Activated CD4-positive, alpha-beta memory T cell treated with anti-CD3 and anti-CD28 coated beads, Interleukin-2, amount 10 ng/mL, durations not matched to agents 7 days and 5 days (primary cell): ENCODE measurements at regions of chr19 and their contacts with region 1.

Region 1: GRCh38 chr19:16628183-16628983 is at the start of gene MED26:
- DNase-seq: peak; percentile 96
- H3K4me3 Mint-ChIP-seq: peak within 1 kb of the TSS; percentile 99
- H3K27ac Mint-ChIP-seq: peak within 1 kb of the TSS; percentile 100
- H3K4me1 Mint-ChIP-seq: peaks cover 63% of the 10 kb centered on the region
- H3K27me3 Mint-ChIP-seq: no peaks in the 10 kb centered on the region
- total RNA-seq, gene MED26: 15.5 to 15.9 TPM

Region 2: DNA sequence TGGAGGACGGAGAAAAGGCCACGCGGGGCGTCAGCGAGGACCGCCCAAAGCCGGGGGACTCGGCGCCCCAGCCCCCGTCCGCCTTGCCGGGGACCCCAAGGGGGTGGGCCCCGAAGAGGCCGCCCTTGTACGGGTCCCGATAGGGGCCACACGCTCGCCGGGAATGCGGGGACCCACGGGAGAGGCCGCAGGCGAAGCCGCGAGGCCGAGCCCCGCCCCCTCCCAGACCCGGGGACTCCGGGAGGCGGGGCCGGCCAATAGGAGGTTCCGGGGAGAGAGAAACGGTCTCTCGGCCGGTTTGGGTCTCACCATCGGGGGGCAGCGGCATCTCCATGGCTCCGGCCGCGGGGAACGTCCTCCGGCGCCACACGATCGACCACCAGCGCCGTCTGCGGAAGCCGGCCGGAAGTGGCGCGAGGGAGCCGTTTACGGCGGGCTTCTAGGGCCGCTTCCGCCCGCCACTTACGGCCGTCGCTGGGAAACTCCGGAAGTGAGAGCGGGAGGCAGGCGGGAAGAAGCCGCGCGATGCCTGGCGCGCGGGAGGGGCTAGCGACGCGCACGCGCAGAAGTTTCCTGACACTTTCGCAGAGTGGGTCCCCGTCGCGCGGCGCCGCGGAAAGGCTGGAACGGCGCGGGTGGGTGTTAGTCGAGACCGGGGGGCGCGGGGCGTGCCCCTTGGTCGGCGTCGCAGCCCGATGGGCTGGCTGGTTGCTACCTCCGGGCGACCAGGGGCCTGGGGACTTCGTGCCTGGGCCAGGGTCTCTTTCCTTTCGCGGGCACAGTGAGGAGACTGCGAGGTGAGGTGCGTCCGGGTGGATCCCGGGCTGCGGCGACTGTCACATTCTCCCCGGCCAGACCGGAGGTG is 86.1 kb before region 1 on chr19 and contains the start of gene CHERP:
- CTCF ChIA-PET with region 1: no interaction called
- POLR2A ChIA-PET with region 1: interaction called, 29 read pairs
- DNase-seq: peak; percentile 95
- H3K4me3 Mint-ChIP-seq: peak within 1 kb of the TSS; percentile 88
- H3K27ac Mint-ChIP-seq: peak within 1 kb of the TSS; percentile 89
- H3K4me1 Mint-ChIP-seq: peaks cover 57% of the 10 kb centered on the region
- H3K27me3 Mint-ChIP-seq: no peaks in the 10 kb centered on the region
- total RNA-seq, gene CHERP: 50.8 to 53.6 TPM

Region 3: DNA sequence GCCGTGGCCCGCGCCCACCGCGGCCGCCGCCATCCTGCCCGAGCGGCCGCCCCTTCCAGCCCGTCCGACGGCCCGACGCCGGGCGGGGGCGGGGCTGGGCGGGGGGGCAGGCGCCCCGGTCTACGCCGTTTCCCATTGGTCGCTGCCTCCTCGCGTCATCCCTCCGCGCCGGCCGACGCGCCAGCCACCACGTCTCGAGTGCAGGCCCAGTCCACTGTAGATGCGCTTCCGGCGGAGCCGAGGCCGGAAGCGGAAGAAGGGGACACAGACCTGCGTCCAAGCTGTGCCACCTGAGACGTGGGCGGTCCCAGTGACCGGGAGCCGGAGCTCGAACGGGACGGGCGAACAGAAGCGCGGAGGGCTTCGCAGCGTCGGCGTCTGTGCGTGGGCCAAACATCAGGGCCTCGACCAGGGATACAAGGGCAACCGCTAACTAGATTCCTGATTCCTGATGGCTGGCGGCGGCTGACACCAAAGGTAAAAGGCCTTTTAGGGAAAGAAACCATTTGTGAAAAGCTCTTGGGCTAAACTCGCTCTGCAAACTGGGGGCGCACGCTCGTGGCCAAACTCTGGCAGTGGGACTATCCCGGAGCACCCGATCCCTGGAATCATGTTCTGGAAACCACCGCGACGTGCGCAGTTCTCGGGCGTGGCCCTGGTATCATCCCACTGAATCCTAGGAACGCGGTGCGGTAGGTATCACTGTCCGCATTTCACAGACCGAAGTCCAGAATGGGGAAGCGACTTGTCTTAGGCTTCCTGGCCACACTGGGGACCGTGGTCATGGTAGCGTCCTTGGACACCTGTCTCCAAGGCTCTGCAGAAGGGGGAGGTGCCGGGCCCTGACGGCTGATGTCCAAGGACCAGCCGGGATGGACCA is 55.8 kb before region 1 on chr19 and contains the start of gene SLC35E1:
- CTCF ChIA-PET with region 1: no interaction called
- POLR2A ChIA-PET with region 1: interaction called, 15 read pairs
- DNase-seq: peak; percentile 93
- H3K4me3 Mint-ChIP-seq: peak within 1 kb of the TSS; percentile 93
- H3K27ac Mint-ChIP-seq: peak within 1 kb of the TSS; percentile 90
- H3K4me1 Mint-ChIP-seq: peaks cover 68% of the 10 kb centered on the region
- H3K27me3 Mint-ChIP-seq: no peaks in the 10 kb centered on the region
- total RNA-seq, gene SLC35E1: 57.3 to 57.7 TPM

Region 4: GRCh38 chr19:16608290-16608739 is 20.1 kb before region 1 on chr19:
- CTCF ChIA-PET with region 1: interaction called, 4 read pairs
- POLR2A ChIA-PET with region 1: interaction called, 12 read pairs
- DNase-seq: no peak
- H3K4me3 Mint-ChIP-seq: no peak overlapping the region
- H3K27ac Mint-ChIP-seq: peak overlapping the region; percentile 23
- H3K4me1 Mint-ChIP-seq: peaks cover 51% of the 10 kb centered on the region
- H3K27me3 Mint-ChIP-seq: no peaks in the 10 kb centered on the region

Region 5: GRCh38 chr19:16659831-16660708 is 31.7 kb after region 1 on chr19 and contains the start of gene SMIM7:
- CTCF ChIA-PET with region 1: no interaction called
- POLR2A ChIA-PET with region 1: interaction called, 73 read pairs
- DNase-seq: peak; percentile 99
- H3K4me3 Mint-ChIP-seq: peak within 1 kb of the TSS; percentile 98
- H3K27ac Mint-ChIP-seq: peak within 1 kb of the TSS; percentile 97
- H3K4me1 Mint-ChIP-seq: peaks cover 52% of the 10 kb centered on the region
- H3K27me3 Mint-ChIP-seq: peaks cover 13% of the 10 kb centered on the region
- total RNA-seq, gene SMIM7: 52.6 to 60.6 TPM

Region 6: GRCh38 chr19:16698914-16699313 is 70.5 kb after region 1 on chr19:
- CTCF ChIA-PET with region 1: no interaction called
- POLR2A ChIA-PET with region 1: no interaction called
- DNase-seq: no peak
- H3K4me3 Mint-ChIP-seq: no peak overlapping the region
- H3K27ac Mint-ChIP-seq: no peak overlapping the region
- H3K4me1 Mint-ChIP-seq: no peaks in the 10 kb centered on the region
- H3K27me3 Mint-ChIP-seq: peaks cover 1% of the 10 kb centered on the region

Region 7: DNA sequence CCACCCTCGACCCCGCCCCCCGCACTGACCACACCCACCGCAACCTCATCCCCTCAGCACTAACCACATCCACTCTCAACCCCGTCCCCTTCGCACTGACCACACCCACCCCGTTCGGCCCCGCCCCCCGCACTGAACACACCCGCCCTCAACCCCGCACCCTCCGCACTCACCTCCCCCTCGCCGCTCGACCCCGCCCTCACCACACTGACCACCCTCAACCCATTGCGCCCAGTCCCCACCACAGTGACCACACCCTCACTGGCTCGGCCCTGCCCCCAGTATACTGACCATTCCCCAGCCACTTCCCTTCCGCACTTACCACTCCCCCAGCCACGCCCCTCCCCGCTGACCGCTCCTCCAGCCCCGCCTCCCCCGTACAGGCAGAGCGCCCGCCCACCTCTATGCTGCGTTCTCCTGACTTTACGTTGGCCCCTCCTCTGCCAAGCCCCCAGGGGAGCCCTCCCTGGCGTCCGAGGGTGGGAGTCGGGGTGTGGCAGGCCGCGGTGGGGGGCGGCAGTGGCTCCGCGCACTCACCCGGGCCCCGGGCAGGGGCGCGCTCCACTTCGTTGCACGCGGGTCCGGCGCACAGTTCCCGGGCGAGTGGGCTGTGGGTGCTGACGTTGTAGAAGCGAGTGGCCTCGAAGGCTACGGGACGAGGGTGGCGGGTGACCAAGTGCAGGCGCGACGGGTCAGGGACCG is 268.9 kb after region 1 on chr19:
- CTCF ChIA-PET with region 1: no interaction called
- POLR2A ChIA-PET with region 1: no interaction called
- DNase-seq: peak; percentile 84
- H3K4me3 Mint-ChIP-seq: peak overlapping the region; percentile 65
- H3K27ac Mint-ChIP-seq: peak overlapping the region; percentile 58
- H3K4me1 Mint-ChIP-seq: peaks cover 35% of the 10 kb centered on the region
- H3K27me3 Mint-ChIP-seq: peaks cover 20% of the 10 kb centered on the region

Region 8: GRCh38 chr19:17149393-17150135 is 521.2 kb after region 1 on chr19:
- CTCF ChIA-PET with region 1: no interaction called
- POLR2A ChIA-PET with region 1: no interaction called
- DNase-seq: no peak
- H3K4me3 Mint-ChIP-seq: no peak overlapping the region
- H3K27ac Mint-ChIP-seq: no peak overlapping the region
- H3K4me1 Mint-ChIP-seq: no peaks in the 10 kb centered on the region
- H3K27me3 Mint-ChIP-seq: no peaks in the 10 kb centered on the region